Left cardiac atrium (tissue), 4 donors: ENCODE measurements at regions of chr1 and their contacts with region 1.

Region 1: GRCh38 chr1:94599095-94599813 is 57.7 kb upstream of the F3 start:
- DNase-seq: no peak
- ATAC-seq: peak; percentile 70 to 86

Region 2: GRCh38 chr1:94522304-94522703 is 77.0 kb before region 1 on chr1:
- intact Hi-C with region 1: loop called (anchors 5 to 10 kb)
- DNase-seq: no peak
- ATAC-seq: peak; percentile 44 to 65